ENCODE measurements at regions of chr11 and their contacts with region 1.

Region 1: GRCh38 chr11:6251120-6251733 is 8.4 kb upstream of the CCKBR start:
- DNase-seq: peak; percentile 80 to 87 (median 83)
- H3K4me3 ChIP-seq: no peak overlapping the region
- H3K27ac ChIP-seq: no peak overlapping the region
- H3K4me1 ChIP-seq: no peaks in the 10 kb centered on the region
- H3K27me3 ChIP-seq: no peaks in the 10 kb centered on the region
- CTCF ChIP-seq: peak; percentile 90

Region 2: GRCh38 chr11:5564259-5565019 is 686.8 kb before region 1 on chr11:
- intact Hi-C with region 1: no loop called
- DNase-seq: no peak
- H3K4me3 ChIP-seq: no peak overlapping the region
- H3K27ac ChIP-seq: no peak overlapping the region
- H3K4me1 ChIP-seq: no peaks in the 10 kb centered on the region
- H3K27me3 ChIP-seq: no peaks in the 10 kb centered on the region
- CTCF ChIP-seq: no peak

Region 3: DNA sequence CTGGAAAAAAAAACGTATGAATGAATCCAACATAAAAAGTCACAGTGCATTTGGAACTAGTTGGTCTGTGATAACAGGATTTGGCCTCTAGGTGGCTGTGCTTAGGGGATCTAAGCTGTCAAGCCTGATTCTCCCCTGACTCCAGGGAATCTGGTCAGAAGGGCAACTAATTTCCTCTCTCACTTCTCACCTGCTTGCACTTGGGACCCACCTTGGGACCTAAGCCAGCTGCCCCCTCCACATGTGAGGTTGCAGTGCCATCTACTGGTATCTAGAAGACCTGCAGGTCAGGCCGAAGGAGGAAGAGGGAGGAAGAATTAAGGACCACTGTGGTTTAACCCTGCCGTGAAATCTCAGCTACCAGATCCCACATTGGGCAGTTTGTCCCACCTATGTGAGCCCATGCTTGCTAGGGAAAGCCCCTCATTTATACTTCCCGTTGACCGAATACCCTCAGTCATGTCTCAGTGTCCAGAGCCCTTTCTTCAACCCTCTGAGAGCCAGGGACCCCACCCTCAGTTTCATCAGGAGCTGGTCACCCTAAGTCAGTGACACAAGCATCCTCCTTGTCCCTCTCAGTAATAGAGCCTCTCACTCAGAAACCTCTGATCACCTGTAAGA is 102.2 kb after region 1 on chr11:
- intact Hi-C with region 1: loop called (anchors 10 kb)
- DNase-seq: peak; percentile 70 to 88 (median 79)
- H3K4me3 ChIP-seq: no peak overlapping the region
- H3K27ac ChIP-seq: no peak overlapping the region
- H3K4me1 ChIP-seq: peaks cover 0 to 15% (median 2%) of the 10 kb centered on the region in 3 donors
- H3K27me3 ChIP-seq: no peaks in the 10 kb centered on the region
- CTCF ChIP-seq: peak; percentile 92

Measured in kidney (tissue), 22 donors.